Activated T-helper 1 cell treated with anti-CD3 and anti-CD28 coated beads, Interleukin-12 subunit alpha, Interleukin-12 subunit beta, Interleukin-2, Interleukin-4 antibody, amounts not matched to agents 30 ng/mL and 10 ng/mL and 1 ng/mL, durations not matched to agents 14 hours and 24 hours and 36 hours (primary cell): ENCODE measurements at regions of chr11 and their contacts with region 1.

Region 1: GRCh38 chr11:65553301-65554031 is 4.7 kb downstream of the LTBP3 start:
- DNase-seq: peak; percentile 77
- H3K4me3 Mint-ChIP-seq: peak overlapping the region; percentile 30
- H3K27ac Mint-ChIP-seq: peak overlapping the region; percentile 29
- H3K4me1 Mint-ChIP-seq: peaks cover 53% of the 10 kb centered on the region
- H3K27me3 Mint-ChIP-seq: no peaks in the 10 kb centered on the region

Region 2: GRCh38 chr11:65540297-65541092 is 13.0 kb before region 1 on chr11:
- intact Hi-C with region 1: loop called (anchors 1 kb)
- DNase-seq: peak; percentile 86
- H3K4me3 Mint-ChIP-seq: peak overlapping the region; percentile 85
- H3K27ac Mint-ChIP-seq: peak overlapping the region; percentile 88
- H3K4me1 Mint-ChIP-seq: peaks cover 28% of the 10 kb centered on the region
- H3K27me3 Mint-ChIP-seq: no peaks in the 10 kb centered on the region

Region 3: DNA sequence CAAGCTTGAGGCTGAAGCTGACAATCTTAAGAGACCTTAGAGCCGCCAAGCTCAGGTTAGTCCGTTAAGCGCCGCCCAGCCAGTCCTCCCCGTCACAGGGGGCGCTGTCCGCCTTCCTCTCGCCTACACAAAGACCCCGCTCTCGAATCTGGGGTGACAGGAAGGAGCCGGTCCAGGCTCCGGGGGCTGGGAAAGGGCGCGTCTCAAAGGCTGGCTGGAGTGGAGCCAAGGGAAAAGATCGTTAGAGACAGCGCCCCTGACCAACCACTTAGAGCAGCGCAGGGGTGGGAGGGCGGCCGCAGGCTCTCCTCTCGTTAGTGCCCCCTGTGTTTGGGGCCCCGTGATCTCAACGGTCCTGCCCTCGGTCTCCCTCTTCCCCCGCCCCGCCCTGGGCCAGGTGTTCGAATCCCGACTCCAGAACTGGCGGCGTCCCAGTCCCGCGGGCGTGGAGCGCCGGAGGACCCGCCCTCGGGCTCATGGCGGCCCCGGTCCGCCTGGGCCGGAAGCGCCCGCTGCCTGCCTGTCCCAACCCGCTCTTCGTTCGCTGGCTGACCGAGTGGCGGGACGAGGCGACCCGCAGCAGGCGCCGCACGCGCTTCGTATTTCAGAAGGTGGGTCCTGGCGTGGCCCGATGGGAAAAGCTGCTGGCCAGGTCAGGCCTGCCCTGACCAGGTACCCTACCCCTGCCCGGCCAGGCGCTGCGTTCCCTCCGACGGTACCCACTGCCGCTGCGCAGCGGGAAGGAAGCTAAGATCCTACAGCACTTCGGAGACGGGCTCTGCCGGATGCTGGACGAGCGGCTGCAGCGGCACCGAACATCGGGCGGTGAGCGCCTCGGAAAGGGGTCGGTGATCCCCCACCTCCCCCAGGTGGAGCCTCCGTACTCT is 307.1 kb after region 1 on chr11 and contains the start of gene MUS81:
- intact Hi-C with region 1: no loop called
- DNase-seq: peak; percentile 94
- H3K4me3 Mint-ChIP-seq: peak within 1 kb of the TSS; percentile 96
- H3K27ac Mint-ChIP-seq: peak within 1 kb of the TSS; percentile 99
- H3K4me1 Mint-ChIP-seq: peaks cover 38% of the 10 kb centered on the region
- H3K27me3 Mint-ChIP-seq: no peaks in the 10 kb centered on the region
- total RNA-seq, gene MUS81: 77.7 and 79.6 TPM in 2 replicates

Region 4: GRCh38 chr11:65945430-65945911 is 392.0 kb after region 1 on chr11 and contains the start of gene TSGA10IP:
- intact Hi-C with region 1: no loop called
- DNase-seq: no peak
- H3K4me3 Mint-ChIP-seq: no peak within 1 kb of the TSS
- H3K27ac Mint-ChIP-seq: no peak within 1 kb of the TSS
- H3K4me1 Mint-ChIP-seq: peaks cover 4% of the 10 kb centered on the region
- H3K27me3 Mint-ChIP-seq: peaks cover 5% of the 10 kb centered on the region
- total RNA-seq, gene TSGA10IP: not detected in 2 replicates

Region 5: DNA sequence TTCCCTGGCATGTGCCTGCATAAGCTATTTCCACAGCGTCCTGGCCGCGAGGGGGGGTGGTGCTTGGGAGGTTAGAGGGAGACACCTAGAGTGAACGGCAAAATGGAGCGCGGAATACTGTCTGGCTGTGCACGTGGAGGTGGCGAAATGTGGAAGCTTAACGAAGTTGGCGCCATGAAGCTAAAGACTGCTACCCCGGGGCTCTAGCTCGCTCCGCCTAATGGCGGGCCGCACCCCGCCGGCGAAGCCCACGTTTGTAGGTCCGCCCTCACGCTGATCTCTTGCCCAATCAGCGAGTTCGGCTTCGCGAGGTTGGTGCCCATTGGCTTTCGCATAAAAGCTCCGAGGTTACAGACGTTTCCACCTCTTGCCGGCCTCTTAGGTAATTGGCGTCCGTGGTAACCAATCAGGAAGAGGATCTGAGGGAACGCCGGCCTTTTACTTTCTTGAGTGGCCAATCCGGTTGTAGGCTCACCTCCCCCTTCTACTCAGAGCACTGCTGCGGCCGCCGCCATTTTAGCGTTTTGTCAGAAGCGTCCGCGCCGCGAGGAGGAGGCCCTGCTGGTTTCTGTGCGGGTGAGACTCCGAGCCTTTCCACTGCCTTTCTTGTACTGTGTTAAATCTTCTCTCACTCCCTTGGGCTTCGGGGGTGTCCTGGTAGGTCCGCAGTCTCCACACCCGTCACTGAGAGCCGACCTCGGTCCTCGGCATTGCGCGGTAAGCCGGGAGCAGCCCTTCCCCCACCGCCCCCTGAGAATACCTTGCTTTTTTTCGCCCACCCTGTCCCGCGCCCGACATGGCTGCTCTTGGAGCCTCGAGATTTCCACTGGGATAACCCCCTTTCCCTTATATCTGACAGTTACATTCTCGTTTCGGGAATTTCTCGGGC is 1085.0 kb after region 1 on chr11 and contains the start of gene RBM4:
- intact Hi-C with region 1: no loop called
- DNase-seq: peak; percentile 97
- H3K4me3 Mint-ChIP-seq: peak within 1 kb of the TSS; percentile 96
- H3K27ac Mint-ChIP-seq: peak within 1 kb of the TSS; percentile 96
- H3K4me1 Mint-ChIP-seq: peaks cover 68% of the 10 kb centered on the region
- H3K27me3 Mint-ChIP-seq: no peaks in the 10 kb centered on the region
- total RNA-seq, gene RBM4: 131 and 133 TPM in 2 replicates